Gastrocnemius medialis (tissue), 4 donors: ENCODE measurements at regions of chr20 and their contacts with region 1.

Region 1: GRCh38 chr20:32762149-32762753 is at the start of gene DNMT3B:
- DNase-seq: peak; percentile 38 to 52
- ATAC-seq: peak; percentile 84
- H3K4me3 ChIP-seq: peak within 1 kb of the TSS; percentile 68 to 89 (median 76)
- H3K27ac ChIP-seq: peak within 1 kb of the TSS in 1 of 4 donors; percentile 37
- H3K4me1 ChIP-seq: peaks cover 9% of the 10 kb centered on the region in 2 donors
- H3K27me3 ChIP-seq: no peaks in the 10 kb centered on the region
- CTCF ChIP-seq: peak in 3 of 5 experiments; percentile 6 to 31 (median 21)
- POLR2A ChIP-seq: no peak
- total RNA-seq, gene DNMT3B: 0.20 to 0.39 (median 0.30) TPM

Region 2: DNA sequence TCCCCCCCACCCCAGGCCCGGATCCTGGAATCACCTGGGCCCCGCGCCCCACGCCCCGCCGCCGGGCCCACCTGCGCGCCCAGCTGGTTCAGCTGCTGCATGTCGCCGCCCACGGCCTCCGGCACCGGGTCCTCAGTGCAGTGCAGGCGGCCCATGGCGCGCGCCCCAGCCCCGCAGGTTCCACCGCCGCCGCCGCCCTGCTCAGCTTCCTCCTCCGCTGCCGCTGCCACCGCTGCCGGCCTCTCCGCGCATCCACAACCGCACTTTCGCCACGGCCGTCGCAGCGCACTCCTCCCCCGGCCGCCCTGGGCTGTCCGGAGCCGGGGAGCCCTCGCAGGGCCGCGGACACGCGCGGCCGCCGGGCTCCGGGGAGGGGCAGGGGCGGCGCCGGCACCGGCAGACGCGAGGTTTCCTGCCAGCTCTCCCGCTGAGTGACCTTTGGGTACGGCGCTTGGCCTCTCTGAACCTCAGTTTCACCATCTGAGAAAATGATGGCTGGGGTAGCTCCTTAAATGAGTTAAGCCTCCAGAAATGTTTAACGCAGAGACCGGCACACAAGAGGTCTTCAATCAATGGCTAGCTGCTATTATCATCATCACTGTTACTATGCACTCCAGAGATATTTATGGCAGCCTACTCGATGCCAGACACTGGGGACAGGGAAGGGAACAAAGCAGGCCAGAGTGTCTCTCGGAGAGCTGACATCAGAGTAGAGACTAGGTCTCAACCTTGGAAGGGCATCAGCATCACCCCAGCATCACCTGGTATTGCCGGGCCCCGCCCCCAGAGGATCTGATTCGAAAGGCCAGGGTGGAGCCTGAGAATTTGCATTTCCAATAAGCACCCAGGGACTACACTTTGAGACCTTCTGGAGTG is 18.8 kb before region 1 on chr20 and contains the start of gene COMMD7:
- in situ Hi-C with region 1: no loop called
- intact Hi-C with region 1: loop called (anchors 1 kb)
- DNase-seq: peak in 1 of 2 donors; percentile 24
- ATAC-seq: peak; percentile 50 to 69
- H3K4me3 ChIP-seq: peak within 1 kb of the TSS; percentile 65 to 79 (median 72)
- H3K27ac ChIP-seq: peak within 1 kb of the TSS; percentile 70 to 75 (median 72)
- H3K4me1 ChIP-seq: peaks cover 4 to 15% of the 10 kb centered on the region in 2 donors
- H3K27me3 ChIP-seq: no peaks in the 10 kb centered on the region
- CTCF ChIP-seq: no peak
- POLR2A ChIP-seq: no peak
- total RNA-seq, gene COMMD7: 12.2 to 22.6 (median 15.8) TPM

Region 3: GRCh38 chr20:32819992-32820710 is 57.9 kb after region 1 on chr20:
- in situ Hi-C with region 1: no loop called
- intact Hi-C with region 1: loop called (anchors 1 kb)
- DNase-seq: peak in 1 of 2 donors; percentile 32
- ATAC-seq: peak; percentile 83 to 84
- H3K4me3 ChIP-seq: peak overlapping the region; percentile 67 to 91 (median 71)
- H3K27ac ChIP-seq: peak overlapping the region; percentile 77 to 96 (median 89)
- H3K4me1 ChIP-seq: peaks cover 31 to 33% of the 10 kb centered on the region in 2 donors
- H3K27me3 ChIP-seq: no peaks in the 10 kb centered on the region
- CTCF ChIP-seq: peak in 1 of 5 experiments; percentile 24
- POLR2A ChIP-seq: peak; percentile 40 to 42